Activated naive CD4-positive, alpha-beta T cell treated with anti-CD3 and anti-CD28 coated beads for 36 hours (primary cell): ENCODE measurements at regions of chr1 and their contacts with region 1.

Region 1: DNA sequence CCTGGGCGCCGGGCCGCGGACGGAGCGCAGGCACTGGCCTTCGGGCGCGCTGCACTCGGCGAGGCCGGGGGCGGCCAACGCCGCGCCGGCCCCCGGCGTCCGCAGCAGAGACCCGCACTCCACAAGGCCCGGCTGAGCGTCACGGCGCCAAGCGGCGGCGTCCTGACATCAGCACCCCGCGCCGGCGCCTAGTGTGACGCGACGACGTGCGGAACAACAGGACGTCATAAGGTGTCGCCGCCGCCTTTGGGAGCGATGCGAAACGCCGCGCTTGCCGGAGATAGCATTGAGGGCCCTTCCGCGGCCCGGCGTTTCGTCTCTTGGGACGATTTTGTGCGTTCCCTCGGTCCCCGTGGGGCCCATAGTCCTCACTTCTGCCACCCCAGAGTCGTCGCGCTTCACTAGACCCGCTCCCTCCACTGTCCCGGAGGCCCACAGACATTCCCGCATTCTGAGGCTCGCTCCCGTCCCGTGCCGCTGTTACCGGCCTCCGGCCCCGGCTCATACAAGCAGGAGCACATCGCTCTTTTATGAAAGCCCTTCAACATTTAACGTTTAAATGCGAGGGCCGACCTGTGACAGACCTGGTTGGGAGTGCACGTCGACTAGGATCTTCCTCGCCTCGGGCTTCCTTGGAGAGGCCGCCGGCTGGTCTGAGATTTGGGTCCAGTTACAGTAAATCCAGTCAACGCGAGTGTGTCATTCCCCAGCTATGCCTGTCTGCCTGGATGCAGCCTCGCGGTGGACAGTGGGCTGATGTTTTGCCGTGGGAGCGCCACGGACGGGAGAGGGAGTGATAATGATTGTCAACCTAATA is at the start of gene SSU72:
- DNase-seq: peak; percentile 94
- H3K4me3 Mint-ChIP-seq: peak within 1 kb of the TSS; percentile 98
- H3K27ac Mint-ChIP-seq: peak within 1 kb of the TSS; percentile 97
- H3K4me1 Mint-ChIP-seq: peaks cover 42% of the 10 kb centered on the region
- H3K27me3 Mint-ChIP-seq: no peaks in the 10 kb centered on the region
- total RNA-seq, gene SSU72: 91.6 to 95.9 TPM

Region 2: GRCh38 chr1:1349256-1350012 is 225.5 kb before region 1 on chr1 and contains the start of gene DVL1:
- CTCF ChIA-PET with region 1: no interaction called
- intact Hi-C with region 1: no loop called
- DNase-seq: peak; percentile 79
- H3K4me3 Mint-ChIP-seq: peak within 1 kb of the TSS; percentile 76
- H3K27ac Mint-ChIP-seq: no peak within 1 kb of the TSS
- H3K4me1 Mint-ChIP-seq: peaks cover 28% of the 10 kb centered on the region
- H3K27me3 Mint-ChIP-seq: peaks cover 12% of the 10 kb centered on the region
- total RNA-seq, gene DVL1: 33.4 to 35.0 TPM

Region 3: DNA sequence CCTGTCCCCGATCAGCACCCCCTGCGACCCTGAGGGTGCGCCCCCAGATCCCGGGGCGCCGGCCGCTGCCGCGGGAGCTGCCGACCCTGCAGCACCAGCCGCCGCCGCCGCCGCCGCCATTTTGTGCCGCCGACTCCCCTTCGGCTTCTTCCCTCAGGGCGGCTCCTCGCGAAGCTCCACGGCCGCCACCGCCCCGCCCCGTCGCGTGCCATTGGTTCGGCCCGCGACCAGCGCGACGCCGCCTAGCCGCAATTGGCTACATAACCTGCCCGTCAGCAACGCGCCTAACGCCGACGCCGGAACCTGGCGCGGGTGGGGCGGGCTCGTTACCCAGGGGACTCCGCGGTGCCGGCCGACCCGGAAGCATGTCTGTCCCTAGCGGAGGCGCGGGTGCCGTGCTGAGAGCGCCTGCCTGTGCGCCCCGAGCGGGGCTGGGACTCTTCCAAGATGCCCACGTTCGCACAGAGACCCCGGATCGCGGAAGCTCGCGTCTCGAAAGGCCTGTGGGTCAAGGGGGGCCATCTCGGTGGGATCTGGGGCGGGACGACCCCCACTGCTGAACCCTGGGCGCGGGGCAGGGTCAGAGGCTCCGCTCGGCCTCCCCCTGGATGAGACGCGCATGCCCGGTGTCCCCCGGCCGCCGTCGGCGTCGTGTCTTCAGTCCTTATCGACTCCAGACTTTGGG is 175.6 kb before region 1 on chr1 and contains the start of gene CCNL2:
- CTCF ChIA-PET with region 1: no interaction called
- intact Hi-C with region 1: loop called (anchors 1 kb)
- DNase-seq: peak; percentile 99
- H3K4me3 Mint-ChIP-seq: peak within 1 kb of the TSS; percentile 91
- H3K27ac Mint-ChIP-seq: peak within 1 kb of the TSS; percentile 85
- H3K4me1 Mint-ChIP-seq: peaks cover 57% of the 10 kb centered on the region
- H3K27me3 Mint-ChIP-seq: no peaks in the 10 kb centered on the region
- total RNA-seq, gene CCNL2: 97.7 to 108 TPM

Region 4: DNA sequence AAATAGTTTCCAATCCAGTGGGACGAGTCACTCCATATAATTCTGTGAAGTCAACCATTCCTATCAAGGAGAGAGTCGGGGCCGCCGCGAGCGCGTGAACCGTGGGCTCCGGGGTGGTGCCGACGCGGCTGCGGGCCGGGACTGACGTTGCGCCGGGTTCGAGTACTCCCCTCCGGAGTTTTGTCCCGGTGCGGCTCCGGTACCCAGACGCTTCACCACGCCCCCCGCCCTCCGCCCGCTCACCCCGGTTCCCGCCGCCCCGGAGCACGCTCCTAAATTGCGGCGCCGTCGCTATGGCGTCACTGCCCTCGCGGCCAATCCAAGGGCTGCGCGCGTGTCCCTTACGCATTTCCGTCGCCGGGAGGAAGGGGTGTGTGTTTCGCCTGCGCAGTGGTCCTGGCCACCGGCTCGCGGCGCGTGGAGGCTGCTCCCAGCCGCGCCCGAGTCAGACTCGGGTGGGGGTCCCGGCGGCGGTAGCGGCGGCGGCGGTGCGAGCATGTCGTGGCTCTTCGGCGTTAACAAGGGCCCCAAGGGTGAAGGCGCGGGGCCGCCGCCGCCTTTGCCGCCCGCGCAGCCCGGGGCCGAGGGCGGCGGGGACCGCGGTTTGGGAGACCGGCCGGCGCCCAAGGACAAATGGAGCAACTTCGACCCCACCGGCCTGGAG is 103.4 kb before region 1 on chr1 and contains the start of gene ATAD3B:
- CTCF ChIA-PET with region 1: no interaction called
- intact Hi-C with region 1: loop called (anchors 1 kb)
- DNase-seq: peak; percentile 96
- H3K4me3 Mint-ChIP-seq: peak within 1 kb of the TSS; percentile 80
- H3K27ac Mint-ChIP-seq: peak within 1 kb of the TSS; percentile 46
- H3K4me1 Mint-ChIP-seq: peaks cover 14% of the 10 kb centered on the region
- H3K27me3 Mint-ChIP-seq: no peaks in the 10 kb centered on the region
- total RNA-seq, gene ATAD3B: 32.7 to 38.7 TPM

Region 5: DNA sequence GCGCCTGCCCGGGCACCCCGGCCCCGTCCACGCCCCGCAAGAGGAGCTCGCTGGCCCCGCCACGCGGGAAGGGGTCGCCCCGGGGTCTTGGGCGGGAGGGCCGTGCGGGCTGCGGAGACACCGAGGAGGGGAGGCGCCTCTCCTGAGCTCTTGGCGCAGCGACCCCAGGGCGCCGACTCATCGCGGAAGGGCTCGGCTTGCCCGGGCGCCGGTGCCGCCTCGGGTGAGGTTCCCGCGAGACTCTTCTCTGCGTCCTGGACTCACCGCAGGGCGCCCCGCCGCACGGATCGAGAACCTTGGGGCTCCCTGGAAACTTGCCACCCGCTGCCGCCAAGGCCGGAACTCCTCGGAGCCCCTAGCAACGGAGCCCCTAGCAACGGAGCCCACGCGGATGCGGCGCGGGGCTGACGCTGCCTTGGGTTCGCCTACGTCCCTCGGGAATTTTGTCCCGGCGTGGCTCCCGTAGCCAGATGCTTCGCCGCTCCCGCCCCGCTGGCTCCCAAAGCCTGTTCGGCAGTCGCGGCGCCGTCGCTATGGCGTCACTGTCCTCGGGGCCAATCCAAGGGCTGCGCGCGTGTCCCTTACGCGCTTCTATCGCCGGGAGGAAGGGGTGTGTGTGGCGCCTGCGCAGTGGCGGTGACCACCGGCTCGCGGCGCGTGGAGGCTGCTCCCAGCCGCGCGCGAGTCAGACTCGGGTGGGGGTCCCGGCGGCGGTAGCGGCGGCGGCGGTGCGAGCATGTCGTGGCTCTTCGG is 63.2 kb before region 1 on chr1 and contains the start of gene ATAD3A:
- CTCF ChIA-PET with region 1: no interaction called
- intact Hi-C with region 1: loop called (anchors 1 kb)
- DNase-seq: peak; percentile 99
- H3K4me3 Mint-ChIP-seq: peak within 1 kb of the TSS; percentile 80
- H3K27ac Mint-ChIP-seq: peak within 1 kb of the TSS; percentile 73
- H3K4me1 Mint-ChIP-seq: peaks cover 10% of the 10 kb centered on the region
- H3K27me3 Mint-ChIP-seq: no peaks in the 10 kb centered on the region
- total RNA-seq, gene ATAD3A: 39.4 to 41.0 TPM

Region 6: GRCh38 chr1:1597275-1597930 is 22.5 kb after region 1 on chr1:
- CTCF ChIA-PET with region 1: interaction called, 3 read pairs
- intact Hi-C with region 1: loop called (anchors 2 kb)
- DNase-seq: peak; percentile 27
- H3K4me3 Mint-ChIP-seq: no peak overlapping the region
- H3K27ac Mint-ChIP-seq: no peak overlapping the region
- H3K4me1 Mint-ChIP-seq: peaks cover 11% of the 10 kb centered on the region
- H3K27me3 Mint-ChIP-seq: peaks cover 6% of the 10 kb centered on the region

Region 7: DNA sequence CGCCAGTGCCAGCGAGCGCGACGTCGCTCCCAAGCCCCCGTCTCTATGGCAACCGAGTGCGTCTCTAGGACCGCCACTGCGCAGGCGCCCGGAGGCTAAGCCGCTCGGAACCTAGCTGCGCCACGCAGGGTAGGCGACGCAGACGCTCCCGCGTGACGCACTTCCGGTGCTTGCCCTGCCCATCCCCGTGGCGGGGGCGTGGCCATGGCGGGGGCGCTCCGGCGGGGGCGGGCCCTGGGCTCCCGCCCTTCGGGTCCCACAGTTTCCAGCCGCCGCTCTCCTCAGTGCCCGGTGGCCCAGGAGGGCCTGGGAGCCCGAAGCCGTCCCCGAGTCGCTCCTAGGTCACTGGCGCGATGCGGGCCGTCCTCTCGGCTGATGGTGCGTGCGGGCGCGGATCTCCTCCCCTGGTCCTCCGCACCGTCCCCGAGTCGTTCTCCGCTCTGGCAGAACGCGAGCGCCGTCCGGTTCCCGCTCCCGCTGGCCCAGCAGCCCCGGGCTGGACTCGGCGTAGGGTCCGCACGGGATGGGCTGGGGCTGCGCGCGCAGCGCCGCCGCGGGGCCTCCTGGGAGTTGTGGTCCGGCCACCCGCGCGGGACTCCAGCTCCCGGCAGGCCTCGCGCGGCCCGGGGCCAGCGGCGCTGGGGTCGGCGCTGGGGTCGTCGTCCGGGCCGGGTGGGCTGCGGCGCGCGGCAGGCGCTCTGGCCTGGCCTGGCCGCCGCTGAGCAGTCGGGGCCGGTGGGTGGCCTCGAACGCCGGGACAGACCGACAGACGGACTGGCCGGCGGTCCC is 40.5 kb after region 1 on chr1 and contains the start of gene MIB2:
- CTCF ChIA-PET with region 1: no interaction called
- intact Hi-C with region 1: loop called (anchors 1 kb)
- DNase-seq: peak; percentile 95
- H3K4me3 Mint-ChIP-seq: peak within 1 kb of the TSS; percentile 90
- H3K27ac Mint-ChIP-seq: peak within 1 kb of the TSS; percentile 85
- H3K4me1 Mint-ChIP-seq: peaks cover 24% of the 10 kb centered on the region
- H3K27me3 Mint-ChIP-seq: no peaks in the 10 kb centered on the region
- total RNA-seq, gene MIB2: 27.6 to 31.7 TPM

Region 8: DNA sequence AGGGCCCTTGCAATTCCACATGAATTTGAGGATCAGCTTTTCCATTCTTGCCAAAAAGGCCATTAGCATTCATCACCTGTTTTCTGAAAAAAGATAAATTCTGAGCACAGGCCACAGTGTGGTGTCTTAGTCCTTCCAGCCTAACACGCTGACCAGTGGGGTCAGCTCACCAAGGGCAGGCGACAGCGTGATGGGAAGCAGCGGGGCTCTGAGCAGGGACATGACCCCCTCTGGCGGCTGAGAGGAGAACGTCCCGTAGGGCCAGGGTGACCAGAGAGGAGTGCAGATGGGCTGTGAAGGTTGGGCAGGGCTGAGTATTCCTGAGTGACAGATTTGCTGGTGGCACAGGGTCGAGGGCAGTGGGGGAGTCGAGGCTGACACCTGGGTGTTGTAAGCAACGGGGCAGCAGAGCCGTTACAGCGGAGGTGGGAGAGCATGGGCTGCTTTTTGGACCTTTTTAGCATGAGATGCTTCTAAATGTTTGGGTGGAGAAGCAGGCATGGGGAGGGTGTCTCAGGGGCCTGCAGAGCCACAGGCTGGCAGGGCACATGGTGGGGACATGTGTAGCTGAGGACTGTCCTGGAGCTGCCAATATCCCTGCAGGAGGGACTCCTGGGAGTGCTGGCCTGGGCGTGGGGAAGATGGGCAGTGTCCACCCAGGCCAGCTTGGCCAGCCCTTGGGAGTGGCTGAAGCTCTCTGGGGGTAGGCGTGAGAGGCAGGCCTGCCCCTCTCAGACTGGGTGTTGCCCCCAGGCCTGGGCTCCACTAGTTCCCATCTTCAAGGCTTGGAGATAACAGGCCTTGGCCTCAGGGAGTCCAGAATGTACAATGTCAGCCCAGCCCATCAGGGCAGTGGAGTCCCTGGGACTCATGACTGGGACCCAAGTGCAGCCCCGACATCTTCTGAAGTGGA is 331.5 kb after region 1 on chr1:
- CTCF ChIA-PET with region 1: no interaction called
- intact Hi-C with region 1: loop called (anchors 5 kb)
- DNase-seq: peak; percentile 81
- H3K4me3 Mint-ChIP-seq: peak overlapping the region; percentile 5
- H3K27ac Mint-ChIP-seq: peak overlapping the region; percentile 11
- H3K4me1 Mint-ChIP-seq: peaks cover 16% of the 10 kb centered on the region
- H3K27me3 Mint-ChIP-seq: no peaks in the 10 kb centered on the region